ENCODE measurements at regions of chr5 and their contacts with region 1.

Region 1: GRCh38 chr5:41903892-41904799 is at the start of gene RIMOC1:
- DNase-seq: peak; percentile 98 to 100 (median 99)
- ATAC-seq: peak; percentile 99
- H3K4me3 ChIP-seq: peak within 1 kb of the TSS; percentile 67
- H3K27ac ChIP-seq: peak within 1 kb of the TSS; percentile 86
- H3K4me1 ChIP-seq: peaks cover 6 to 18% of the 10 kb centered on the region in 2 experiments
- H3K27me3 ChIP-seq: no peaks in the 10 kb centered on the region
- CTCF ChIP-seq: no peak
- EP300 ChIP-seq: peak; percentile 40; the same call in 1 of the 2 replicates
- POLR2A ChIP-seq: peak; percentile 98
- RAD21 ChIP-seq: peak; percentile 11 to 19; a peak in 1 of 4 replicates
- polyA plus RNA-seq, gene RIMOC1: 11.6 to 14.3 TPM

Region 2: DNA sequence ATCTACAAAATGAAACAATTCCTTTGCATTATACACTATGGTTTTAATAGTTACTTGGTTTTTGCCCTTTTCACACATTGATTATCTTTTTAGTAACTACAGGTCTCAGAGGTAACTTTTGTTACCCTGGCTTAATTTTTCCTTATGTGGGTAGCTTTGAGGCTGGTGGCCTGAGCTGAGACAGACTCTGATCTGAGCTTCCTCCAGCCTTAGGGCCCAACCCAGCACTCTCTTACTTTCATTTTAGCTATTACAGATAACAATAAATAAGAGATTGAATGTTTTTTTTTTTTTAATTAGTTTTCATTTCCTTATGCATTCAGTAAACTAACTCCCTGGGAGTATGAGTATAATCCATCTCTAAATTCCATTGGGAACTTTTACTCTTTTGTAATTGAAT is 18.9 kb before region 1 on chr5:
- CTCF ChIA-PET with region 1: no interaction called
- POLR2A ChIA-PET with region 1: interaction called, 12 read pairs
- in situ Hi-C with region 1: no loop called
- intact Hi-C with region 1: loop called (anchors 2 kb)
- DNase-seq: no peak
- ATAC-seq: peak; percentile 15; the same call in 1 of the 3 replicates
- H3K4me3 ChIP-seq: no peak overlapping the region
- H3K27ac ChIP-seq: no peak overlapping the region
- H3K4me1 ChIP-seq: peaks cover 4 to 21% of the 10 kb centered on the region in 2 experiments; a peak in 3 of 5 replicates
- H3K27me3 ChIP-seq: no peaks in the 10 kb centered on the region
- CTCF ChIP-seq: no peak
- EP300 ChIP-seq: no peak
- POLR2A ChIP-seq: no peak
- RAD21 ChIP-seq: no peak

Region 3: GRCh38 chr5:41893074-41893851 is 10.9 kb before region 1 on chr5:
- CTCF ChIA-PET with region 1: no interaction called
- POLR2A ChIA-PET with region 1: interaction called, 10 read pairs
- in situ Hi-C with region 1: no loop called
- intact Hi-C with region 1: no loop called
- DNase-seq: no peak
- ATAC-seq: no peak
- H3K4me3 ChIP-seq: no peak overlapping the region
- H3K27ac ChIP-seq: no peak overlapping the region
- H3K4me1 ChIP-seq: peaks cover 7 to 18% of the 10 kb centered on the region in 2 experiments; a peak in 4 of 5 replicates
- H3K27me3 ChIP-seq: no peaks in the 10 kb centered on the region
- CTCF ChIP-seq: no peak
- EP300 ChIP-seq: no peak
- POLR2A ChIP-seq: no peak
- RAD21 ChIP-seq: no peak

Region 4: GRCh38 chr5:41924872-41925554 is 20.9 kb after region 1 on chr5 and contains the start of gene FBXO4:
- CTCF ChIA-PET with region 1: no interaction called
- POLR2A ChIA-PET with region 1: interaction called, 10 read pairs
- in situ Hi-C with region 1: no loop called
- intact Hi-C with region 1: loop called (anchors 1 kb)
- DNase-seq: peak; percentile 80 to 95 (median 86)
- ATAC-seq: peak; percentile 97
- H3K4me3 ChIP-seq: peak within 1 kb of the TSS; percentile 66
- H3K27ac ChIP-seq: peak within 1 kb of the TSS; percentile 91
- H3K4me1 ChIP-seq: peaks cover 9 to 13% of the 10 kb centered on the region in 2 experiments; a peak in 3 of 5 replicates
- H3K27me3 ChIP-seq: no peaks in the 10 kb centered on the region
- CTCF ChIP-seq: peak; percentile 72 to 75 (median 73)
- EP300 ChIP-seq: no peak
- POLR2A ChIP-seq: peak; percentile 94
- RAD21 ChIP-seq: peak; percentile 59 to 61; a peak in 3 of 4 replicates
- polyA plus RNA-seq, gene FBXO4: 5.9 to 8.2 TPM